ENCODE measurements at regions of chr2 and their contacts with region 1.

Region 1: DNA sequence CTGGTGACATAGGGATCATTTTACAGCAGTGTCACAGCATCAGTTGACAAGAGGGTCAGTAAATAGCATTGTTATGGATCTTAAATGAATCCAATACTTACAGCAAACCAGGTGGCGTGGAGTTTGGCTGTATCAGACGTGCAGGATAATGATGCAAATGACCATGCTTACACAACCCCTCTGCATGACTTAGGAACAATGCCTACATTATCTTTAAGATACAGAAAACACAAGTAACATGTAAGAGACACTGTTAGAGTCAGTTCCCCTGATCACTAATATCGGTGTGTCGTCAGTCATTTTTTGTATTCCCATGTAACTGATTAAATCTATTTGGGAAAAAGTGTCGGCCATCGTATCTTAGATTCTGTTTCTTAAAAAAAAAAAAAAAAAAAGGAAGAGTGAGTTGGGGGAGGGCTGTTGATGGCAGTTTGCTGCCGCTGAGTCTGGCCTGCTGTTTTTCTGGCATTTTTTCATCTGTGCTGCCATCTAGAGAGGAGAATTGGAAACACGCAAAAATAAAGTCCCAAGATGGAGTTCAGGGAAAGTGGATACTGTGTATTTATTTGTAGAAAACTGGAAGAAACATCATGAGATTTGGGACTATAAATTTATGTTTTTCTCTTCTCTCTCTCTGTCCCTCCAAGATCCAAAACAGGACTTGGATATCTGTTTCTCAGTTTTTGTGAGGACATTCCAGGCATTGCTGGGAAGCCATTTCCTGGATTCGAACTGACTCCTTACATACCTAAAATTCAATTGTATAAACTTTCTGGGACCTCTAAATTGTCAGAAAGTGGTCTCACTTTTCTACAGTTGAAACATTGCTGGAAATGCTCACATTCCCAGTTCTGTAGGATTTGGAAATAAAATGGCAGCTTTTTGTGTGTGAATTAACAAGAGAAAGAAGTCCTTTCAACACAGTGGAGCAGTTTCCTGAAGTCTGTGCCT is 60.3 kb upstream of the AGPS start:
- DNase-seq: peak; percentile 46 to 70 (median 56)
- H3K4me3 ChIP-seq: no peak overlapping the region
- H3K27ac ChIP-seq: peak overlapping the region in 1 of 2 donors; percentile 59
- H3K4me1 ChIP-seq: peaks cover 1% of the 10 kb centered on the region
- H3K27me3 ChIP-seq: no peaks in the 10 kb centered on the region
- CTCF ChIP-seq: peak; percentile 55 to 78 (median 68)
- EP300 ChIP-seq: no peak
- POLR2A ChIP-seq: no peak

Region 2: DNA sequence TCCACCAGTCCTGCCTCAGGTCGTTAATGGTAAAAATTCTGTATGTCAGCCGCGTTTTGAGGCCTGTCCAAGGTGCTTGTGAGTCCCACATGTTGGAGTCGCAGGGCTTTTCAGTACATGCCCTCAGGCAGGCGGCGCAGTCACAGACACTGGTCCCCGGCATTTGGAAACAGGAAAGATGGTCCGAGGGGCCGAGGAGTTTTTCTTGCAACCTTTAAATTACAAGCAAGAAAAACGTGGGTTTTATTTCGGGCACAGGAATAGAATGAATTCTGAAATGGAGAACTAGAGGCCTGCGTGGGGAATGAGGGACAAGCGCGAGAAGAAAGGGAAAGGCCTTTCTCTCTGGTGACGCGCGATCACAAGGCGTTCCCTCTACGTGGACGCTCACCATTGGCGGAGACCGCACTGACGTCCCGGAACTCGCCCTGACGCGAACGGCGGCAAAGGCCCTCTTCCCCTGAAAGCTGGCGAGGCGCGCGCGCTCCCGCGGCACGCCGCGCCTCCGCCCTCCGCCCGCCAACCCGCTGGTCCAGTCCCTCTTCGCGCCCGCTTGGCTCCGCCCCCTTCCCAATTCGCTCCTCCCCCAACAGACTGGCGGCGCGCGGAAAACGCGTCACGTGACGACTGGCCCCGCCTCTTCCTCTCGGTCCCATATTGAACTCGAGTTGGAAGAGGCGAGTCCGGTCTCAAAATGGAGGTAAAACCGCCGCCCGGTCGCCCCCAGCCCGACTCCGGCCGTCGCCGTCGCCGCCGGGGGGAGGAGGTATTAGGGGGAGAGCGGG is 120.0 kb before region 1 on chr2 and contains the start of gene HNRNPA3:
- intact Hi-C with region 1: loop called in 1 of 4 experiments (anchors 5 kb)
- DNase-seq: peak; percentile 99 to 100 (median 100)
- H3K4me3 ChIP-seq: peak within 1 kb of the TSS; percentile 94
- H3K27ac ChIP-seq: peak within 1 kb of the TSS; percentile 99
- H3K4me1 ChIP-seq: peaks cover 3% of the 10 kb centered on the region
- H3K27me3 ChIP-seq: no peaks in the 10 kb centered on the region
- CTCF ChIP-seq: peak in 2 of 3 donors; percentile 32 to 33
- EP300 ChIP-seq: peak; percentile 89
- POLR2A ChIP-seq: peak; percentile 95
- total RNA-seq, gene HNRNPA3: 71.0 to 240 (median 216) TPM

Region 3: GRCh38 chr2:177604271-177605065 is 272.2 kb after region 1 on chr2:
- intact Hi-C with region 1: loop called in 1 of 4 experiments (anchors 10 kb)
- DNase-seq: peak in 4 of 5 donors; percentile 24 to 65 (median 26)
- H3K4me3 ChIP-seq: no peak overlapping the region
- H3K27ac ChIP-seq: no peak overlapping the region
- H3K4me1 ChIP-seq: peaks cover 10% of the 10 kb centered on the region
- H3K27me3 ChIP-seq: no peaks in the 10 kb centered on the region
- CTCF ChIP-seq: peak; percentile 27 to 65 (median 61)
- EP300 ChIP-seq: no peak
- POLR2A ChIP-seq: no peak

Region 4: DNA sequence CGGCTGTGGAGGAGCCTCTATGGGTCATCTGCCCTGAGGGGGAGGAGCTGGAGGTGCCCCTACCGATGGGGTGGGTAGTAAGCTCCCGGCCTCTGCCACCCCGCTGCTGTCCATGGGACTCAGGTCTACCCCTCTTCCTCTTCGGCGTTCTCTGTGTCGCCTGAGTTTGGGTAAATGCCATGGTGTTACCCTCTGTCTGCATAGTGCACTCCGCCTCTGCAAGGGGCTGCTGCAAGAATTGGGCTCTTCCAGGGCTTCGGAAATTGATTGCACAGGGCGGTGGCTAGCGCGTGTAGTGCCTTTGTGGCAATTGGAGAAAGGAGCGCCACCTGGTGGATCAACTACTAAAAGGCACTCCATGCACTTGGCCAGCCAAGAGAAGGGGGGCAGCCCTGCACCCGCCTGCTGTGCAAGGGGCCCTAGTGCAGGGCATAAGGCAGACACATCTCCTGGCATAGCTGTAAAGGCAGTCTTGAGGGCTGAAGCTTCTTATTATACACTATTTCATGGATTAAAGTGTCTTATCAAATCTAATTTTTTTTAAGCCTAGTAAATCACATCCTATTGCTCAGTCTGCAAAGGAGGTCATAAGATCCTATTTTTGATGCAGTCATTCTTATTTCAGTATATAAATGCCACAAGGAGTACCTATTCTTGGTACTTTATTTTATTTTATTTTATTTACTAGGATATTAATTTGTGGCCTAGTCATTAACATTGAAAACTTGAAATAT is 431.4 kb after region 1 on chr2:
- intact Hi-C with region 1: loop called in 2 of 4 experiments (anchors 5 kb)
- DNase-seq: peak; percentile 60 to 78 (median 73)
- H3K4me3 ChIP-seq: no peak overlapping the region
- H3K27ac ChIP-seq: no peak overlapping the region
- H3K4me1 ChIP-seq: peaks cover 3% of the 10 kb centered on the region
- H3K27me3 ChIP-seq: no peaks in the 10 kb centered on the region
- CTCF ChIP-seq: peak; percentile 34 to 49 (median 47)
- EP300 ChIP-seq: no peak
- POLR2A ChIP-seq: no peak